Activated CD8-positive, alpha-beta T cell treated with anti-CD3 and anti-CD28 coated beads for 36 hours (primary cell): ENCODE measurements at regions of chr16 and their contacts with region 1.

Region 1: GRCh38 chr16:30922960-30923535 is 324 bp upstream of the FBXL19 start:
- DNase-seq: peak; percentile 98
- ATAC-seq: peak; percentile 74
- H3K4me3 Mint-ChIP-seq: peak overlapping the region; percentile 99
- H3K27ac Mint-ChIP-seq: peak overlapping the region; percentile 100
- H3K4me1 Mint-ChIP-seq: peaks cover 20% of the 10 kb centered on the region
- H3K27me3 Mint-ChIP-seq: no peaks in the 10 kb centered on the region
- CTCF ChIP-seq: no peak

Region 2: GRCh38 chr16:30910427-30911029 is 12.5 kb before region 1 on chr16:
- CTCF ChIA-PET with region 1: no interaction called
- POLR2A ChIA-PET with region 1: no interaction called
- intact Hi-C with region 1: no loop called
- DNase-seq: no peak
- ATAC-seq: no peak
- H3K4me3 Mint-ChIP-seq: no peak overlapping the region
- H3K27ac Mint-ChIP-seq: no peak overlapping the region
- H3K4me1 Mint-ChIP-seq: peaks cover 8% of the 10 kb centered on the region
- H3K27me3 Mint-ChIP-seq: no peaks in the 10 kb centered on the region
- CTCF ChIP-seq: no peak

Region 3: GRCh38 chr16:30941600-30942425 is 18.8 kb after region 1 on chr16:
- CTCF ChIA-PET with region 1: interaction called, 22 read pairs
- POLR2A ChIA-PET with region 1: interaction called, 3 read pairs
- intact Hi-C with region 1: no loop called
- DNase-seq: peak; percentile 80
- ATAC-seq: peak; percentile 98
- H3K4me3 Mint-ChIP-seq: peak overlapping the region; percentile 33
- H3K27ac Mint-ChIP-seq: no peak overlapping the region
- H3K4me1 Mint-ChIP-seq: peaks cover 22% of the 10 kb centered on the region
- H3K27me3 Mint-ChIP-seq: no peaks in the 10 kb centered on the region
- CTCF ChIP-seq: peak; percentile 91